Naive thymus-derived CD4-positive, alpha-beta T cell (primary cell): ENCODE measurements at regions of chr1 and their contacts with region 1.

Region 1: GRCh38 chr1:235259133-235259778 is 68.7 kb downstream of the ARID4B start:
- DNase-seq: peak in 2 of 9 donors; percentile 10 to 16
- ATAC-seq: peak; percentile 65
- H3K4me3 ChIP-seq: no peak overlapping the region
- H3K4me3 Mint-ChIP-seq: peak overlapping the region in 7 of 10 donors; percentile 33 to 55 (median 48)
- H3K27ac ChIP-seq: peak overlapping the region; percentile 45
- H3K27ac Mint-ChIP-seq: peak overlapping the region; percentile 41 to 86 (median 71)
- H3K4me1 ChIP-seq: peaks cover 30% of the 10 kb centered on the region in 2 donors
- H3K4me1 Mint-ChIP-seq: peaks cover 40 to 87% (median 71%) of the 10 kb centered on the region in 7 donors
- H3K27me3 ChIP-seq: no peaks in the 10 kb centered on the region
- H3K27me3 Mint-ChIP-seq: no peaks in the 10 kb centered on the region

Region 2: GRCh38 chr1:234427950-234428642 is 831.2 kb before region 1 on chr1:
- CTCF ChIA-PET with region 1: no interaction called
- POLR2A ChIA-PET with region 1: no interaction called
- intact Hi-C with region 1: no loop called
- DNase-seq: no peak
- ATAC-seq: no peak
- H3K4me3 ChIP-seq: no peak overlapping the region
- H3K4me3 Mint-ChIP-seq: no peak overlapping the region
- H3K27ac ChIP-seq: no peak overlapping the region
- H3K27ac Mint-ChIP-seq: no peak overlapping the region
- H3K4me1 ChIP-seq: no peaks in the 10 kb centered on the region
- H3K4me1 Mint-ChIP-seq: peaks cover 0 to 8% (median 0%) of the 10 kb centered on the region in 7 donors
- H3K27me3 ChIP-seq: no peaks in the 10 kb centered on the region
- H3K27me3 Mint-ChIP-seq: no peaks in the 10 kb centered on the region

Region 3: GRCh38 chr1:235275223-235275622 is 16.0 kb after region 1 on chr1:
- CTCF ChIA-PET with region 1: interaction called, 3 read pairs
- POLR2A ChIA-PET with region 1: interaction called, 7 read pairs
- intact Hi-C with region 1: loop called in 1 of 2 experiments (anchors 2 kb)
- DNase-seq: peak in 7 of 9 donors; percentile 10 to 48 (median 31)
- ATAC-seq: peak; percentile 66
- H3K4me3 ChIP-seq: no peak overlapping the region
- H3K4me3 Mint-ChIP-seq: peak overlapping the region; percentile 13 to 66 (median 42)
- H3K27ac ChIP-seq: peak overlapping the region; percentile 10
- H3K27ac Mint-ChIP-seq: peak overlapping the region; percentile 4 to 79 (median 39)
- H3K4me1 ChIP-seq: peaks cover 37% of the 10 kb centered on the region in 2 donors
- H3K4me1 Mint-ChIP-seq: peaks cover 48 to 92% (median 85%) of the 10 kb centered on the region in 7 donors
- H3K27me3 ChIP-seq: no peaks in the 10 kb centered on the region
- H3K27me3 Mint-ChIP-seq: no peaks in the 10 kb centered on the region